ENCODE measurements at regions of chr22 and their contacts with region 1.

Region 1: GRCh38 chr22:22397277-22397870 is 111.2 kb downstream of the ZNF280B start:
- DNase-seq: peak in 4 of 10 donors; percentile 41 to 54 (median 50)
- H3K4me3 ChIP-seq: no peak overlapping the region
- H3K27ac ChIP-seq: peak overlapping the region in 51 of 59 donors; percentile 5 to 87 (median 70)
- H3K27me3 ChIP-seq: no peaks in the 10 kb centered on the region
- CTCF ChIP-seq: peak in 24 of 56 donors; percentile 8 to 42 (median 20)

Region 2: DNA sequence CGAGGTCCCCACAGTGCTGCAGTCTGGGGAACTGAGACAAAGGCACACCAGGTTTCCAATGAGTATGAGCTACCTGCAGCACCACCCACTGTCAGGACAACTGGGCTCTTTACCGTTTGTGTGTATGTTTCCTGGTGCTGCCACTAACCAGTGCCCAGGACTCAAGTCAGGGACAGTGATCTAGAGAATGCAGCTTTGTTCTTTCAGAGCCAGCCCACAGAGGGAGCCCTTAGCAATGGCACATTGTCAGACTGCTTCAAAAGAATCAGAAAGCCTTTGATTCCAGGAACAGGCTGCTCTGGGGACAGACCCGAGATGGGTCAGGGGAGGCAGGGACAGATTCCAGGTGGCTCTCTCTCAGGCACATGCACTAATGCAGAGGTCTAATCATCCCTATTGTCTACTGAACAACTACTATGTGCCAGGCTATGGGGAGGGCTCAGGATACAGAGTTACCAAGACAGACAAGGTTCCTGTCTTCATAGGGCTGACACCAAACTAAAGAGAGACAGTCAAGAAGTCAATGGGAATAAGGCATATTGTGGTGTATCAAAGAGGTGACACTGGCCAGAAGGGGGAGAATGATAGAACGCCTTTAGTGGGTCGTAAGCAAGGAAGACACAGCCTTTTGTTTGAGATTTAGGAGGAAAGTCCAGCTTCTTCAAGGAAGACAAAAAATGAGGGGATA is 49.1 kb before region 1 on chr22:
- intact Hi-C with region 1: loop called in 1 of 2 experiments (anchors 5 kb)
- DNase-seq: peak in 7 of 10 donors; percentile 41 to 85 (median 57)
- H3K4me3 ChIP-seq: no peak overlapping the region
- H3K27ac ChIP-seq: peak overlapping the region in 55 of 59 donors; percentile 18 to 96 (median 77)
- H3K27me3 ChIP-seq: peaks cover 0 to 34% (median 0%) of the 10 kb centered on the region in 45 donors
- CTCF ChIP-seq: peak in 54 of 56 donors; percentile 13 to 73 (median 49)

Region 3: GRCh38 chr22:22450343-22450839 is 53.0 kb after region 1 on chr22:
- intact Hi-C with region 1: no loop called
- DNase-seq: peak in 3 of 10 donors; percentile 4 to 32 (median 15)
- H3K4me3 ChIP-seq: no peak overlapping the region
- H3K27ac ChIP-seq: no peak overlapping the region
- H3K27me3 ChIP-seq: peaks cover 0 to 17% (median 0%) of the 10 kb centered on the region in 45 donors
- CTCF ChIP-seq: no peak